ENCODE measurements at regions of chr12 and their contacts with region 1.

Region 1: GRCh38 chr12:56571126-56571525 is 49.5 kb downstream of the RBMS2 start:
- DNase-seq: no peak
- ATAC-seq: no peak
- H3K4me3 ChIP-seq: no peak overlapping the region
- H3K27ac ChIP-seq: no peak overlapping the region
- H3K4me1 ChIP-seq: peaks cover 10% of the 10 kb centered on the region
- H3K27me3 ChIP-seq: no peaks in the 10 kb centered on the region
- CTCF ChIP-seq: no peak
- EP300 ChIP-seq: no peak
- POLR2A ChIP-seq: no peak
- RAD21 ChIP-seq: no peak

Region 2: DNA sequence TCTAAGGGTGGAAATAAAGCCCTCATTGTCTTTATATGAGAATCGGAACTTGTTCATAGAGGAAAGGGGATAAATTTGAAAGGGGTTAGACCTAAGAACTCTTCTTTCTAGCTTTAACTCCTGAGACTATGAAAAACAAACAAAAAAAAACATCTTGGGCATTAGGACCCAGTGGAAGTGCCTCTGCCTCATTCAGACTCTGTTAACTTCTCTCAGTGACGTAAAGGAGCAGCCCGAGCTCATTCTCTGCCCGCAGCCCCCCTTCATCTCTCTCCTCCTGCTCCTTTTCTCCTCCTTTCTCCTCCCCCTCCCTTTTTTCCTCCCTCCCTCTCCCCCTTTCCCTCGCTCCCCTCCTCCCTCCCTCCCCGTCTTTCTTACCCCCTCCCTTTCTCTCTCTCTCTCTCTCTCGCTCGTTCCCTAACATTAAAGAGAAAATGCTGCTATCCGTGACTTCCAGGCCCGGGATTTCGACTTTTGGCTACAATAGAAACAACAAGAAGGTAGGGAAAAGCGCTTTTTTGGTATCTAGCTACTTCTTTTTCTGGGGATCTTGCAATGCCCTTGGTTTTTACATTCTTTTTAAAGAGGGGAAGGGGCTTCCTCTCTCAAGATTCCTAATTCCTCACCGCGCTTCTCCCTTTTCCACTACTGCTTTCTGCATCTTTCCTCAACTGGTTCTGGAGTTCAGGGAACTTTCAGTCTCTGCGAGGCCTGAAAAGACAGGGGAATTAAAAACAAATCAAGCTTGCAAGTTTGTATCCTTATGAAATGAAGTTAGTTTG is 49.3 kb before region 1 on chr12 and contains the start of gene RBMS2:
- CTCF ChIA-PET with region 1: interaction called, 17 read pairs
- POLR2A ChIA-PET with region 1: interaction called, 4 read pairs
- RAD21 ChIA-PET with region 1: interaction called, 3 read pairs
- SMC1A ChIA-PET with region 1: interaction called, 8 read pairs
- in situ Hi-C with region 1: no loop called
- intact Hi-C with region 1: no loop called
- DNase-seq: no peak
- ATAC-seq: peak; percentile 95
- H3K4me3 ChIP-seq: peak within 1 kb of the TSS; percentile 55; the same call in 1 of the 2 replicates
- H3K27ac ChIP-seq: 0 out of 2 replicates have a peak within 1 kb of the TSS, but pooled peaks have one; percentile 18
- H3K4me1 ChIP-seq: peaks cover 4% of the 10 kb centered on the region; the same call in 1 of the 2 replicates
- H3K27me3 ChIP-seq: no peaks in the 10 kb centered on the region; a peak in 1 of 4 replicates
- CTCF ChIP-seq: no peak
- EP300 ChIP-seq: no peak
- POLR2A ChIP-seq: no peak
- RAD21 ChIP-seq: no peak
- polyA plus RNA-seq, gene RBMS2: 0.90 to 1.1 TPM

Region 3: DNA sequence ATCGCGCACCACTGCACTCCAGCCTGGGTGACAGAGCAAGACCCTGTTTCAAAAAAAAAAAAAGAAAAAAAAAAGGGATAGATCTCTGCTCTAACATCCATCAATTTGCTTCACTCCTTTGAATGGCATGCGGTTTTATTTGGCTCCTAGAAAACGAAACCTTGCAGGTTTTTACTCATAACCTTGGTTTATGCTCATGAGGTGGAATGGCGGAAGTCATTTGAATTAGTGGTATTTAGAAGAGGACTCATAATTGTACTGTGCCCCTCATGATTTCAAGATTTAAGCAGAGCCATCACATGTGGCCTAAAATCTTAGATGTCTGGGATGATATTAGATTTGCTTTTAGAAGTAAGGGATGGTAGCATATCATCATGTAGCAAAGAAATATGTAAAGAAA is 20.1 kb before region 1 on chr12:
- CTCF ChIA-PET with region 1: interaction called, 11 read pairs
- POLR2A ChIA-PET with region 1: no interaction called
- RAD21 ChIA-PET with region 1: interaction called, 4 read pairs
- SMC1A ChIA-PET with region 1: interaction called, 10 read pairs
- in situ Hi-C with region 1: no loop called
- intact Hi-C with region 1: no loop called
- DNase-seq: no peak
- ATAC-seq: peak; percentile 52
- H3K4me3 ChIP-seq: no peak overlapping the region
- H3K27ac ChIP-seq: no peak overlapping the region
- H3K4me1 ChIP-seq: 0 out of 2 replicates have a peak, but pooled peaks cover 4% of the 10 kb centered on the region
- H3K27me3 ChIP-seq: no peaks in the 10 kb centered on the region
- CTCF ChIP-seq: no peak
- EP300 ChIP-seq: no peak
- POLR2A ChIP-seq: no peak
- RAD21 ChIP-seq: no peak

Region 4: GRCh38 chr12:56581418-56582145 is 10.5 kb after region 1 on chr12:
- CTCF ChIA-PET with region 1: interaction called, 22 read pairs
- POLR2A ChIA-PET with region 1: interaction called, 3 read pairs
- RAD21 ChIA-PET with region 1: no interaction called
- SMC1A ChIA-PET with region 1: interaction called, 10 read pairs
- in situ Hi-C with region 1: no loop called
- intact Hi-C with region 1: no loop called
- DNase-seq: peak; percentile 35
- ATAC-seq: peak; percentile 88
- H3K4me3 ChIP-seq: no peak overlapping the region
- H3K27ac ChIP-seq: no peak overlapping the region
- H3K4me1 ChIP-seq: no peaks in the 10 kb centered on the region
- H3K27me3 ChIP-seq: no peaks in the 10 kb centered on the region
- CTCF ChIP-seq: no peak
- EP300 ChIP-seq: no peak
- POLR2A ChIP-seq: no peak
- RAD21 ChIP-seq: no peak

Region 5: DNA sequence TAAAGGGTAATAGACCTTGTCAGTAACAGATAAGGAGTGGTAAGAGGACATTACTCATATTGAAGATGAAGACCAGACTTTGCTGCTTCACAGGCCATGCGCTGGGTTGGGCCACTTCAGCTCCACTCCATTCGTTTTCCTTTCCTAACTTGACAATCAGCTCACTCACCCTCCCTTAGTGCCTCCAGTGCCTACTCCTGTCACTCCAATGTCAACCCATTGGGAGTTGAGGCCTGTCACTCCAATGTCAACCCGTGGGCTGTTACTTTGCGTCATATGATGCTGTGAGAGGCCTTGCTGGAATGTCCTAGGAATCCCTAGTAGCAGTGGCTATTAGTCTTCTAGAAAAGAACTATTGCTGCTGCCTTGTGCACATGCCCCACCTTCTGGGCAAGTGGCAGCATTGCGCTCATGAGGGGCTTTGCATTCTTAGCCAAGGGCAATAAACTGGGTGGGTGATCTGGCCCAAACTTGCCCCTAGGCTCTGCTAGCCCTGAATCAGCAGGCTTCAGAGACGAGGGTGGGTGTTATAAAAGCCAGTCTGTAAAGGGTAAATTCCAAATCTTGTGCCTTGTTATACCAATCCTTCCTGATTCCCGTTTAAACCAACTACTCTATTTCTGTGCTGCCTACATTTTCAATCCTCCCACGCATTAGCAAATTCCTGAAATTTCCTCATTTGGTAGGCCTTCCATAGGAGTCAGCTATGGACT is 22.9 kb after region 1 on chr12:
- CTCF ChIA-PET with region 1: interaction called, 21 read pairs
- POLR2A ChIA-PET with region 1: no interaction called
- RAD21 ChIA-PET with region 1: no interaction called
- SMC1A ChIA-PET with region 1: interaction called, 3 read pairs
- in situ Hi-C with region 1: no loop called
- intact Hi-C with region 1: no loop called
- DNase-seq: no peak
- ATAC-seq: peak; percentile 80
- H3K4me3 ChIP-seq: no peak overlapping the region
- H3K27ac ChIP-seq: no peak overlapping the region
- H3K4me1 ChIP-seq: no peaks in the 10 kb centered on the region; the same call in 1 of the 2 replicates
- H3K27me3 ChIP-seq: no peaks in the 10 kb centered on the region
- CTCF ChIP-seq: peak; percentile 83 to 94 (median 91)
- EP300 ChIP-seq: no peak
- POLR2A ChIP-seq: 0 out of 2 replicates have a peak, but pooled peaks have one; percentile 35
- RAD21 ChIP-seq: peak; percentile 88

Measured in GM12878 (cell line).